Activated CD4-positive, alpha-beta T cell treated with anti-CD3 and anti-CD28 coated beads, Interleukin-2, amount 10 ng/mL, durations not matched to agents 7 days and 5 days (primary cell): ENCODE measurements at regions of chr17 and their contacts with region 1.

Region 1: DNA sequence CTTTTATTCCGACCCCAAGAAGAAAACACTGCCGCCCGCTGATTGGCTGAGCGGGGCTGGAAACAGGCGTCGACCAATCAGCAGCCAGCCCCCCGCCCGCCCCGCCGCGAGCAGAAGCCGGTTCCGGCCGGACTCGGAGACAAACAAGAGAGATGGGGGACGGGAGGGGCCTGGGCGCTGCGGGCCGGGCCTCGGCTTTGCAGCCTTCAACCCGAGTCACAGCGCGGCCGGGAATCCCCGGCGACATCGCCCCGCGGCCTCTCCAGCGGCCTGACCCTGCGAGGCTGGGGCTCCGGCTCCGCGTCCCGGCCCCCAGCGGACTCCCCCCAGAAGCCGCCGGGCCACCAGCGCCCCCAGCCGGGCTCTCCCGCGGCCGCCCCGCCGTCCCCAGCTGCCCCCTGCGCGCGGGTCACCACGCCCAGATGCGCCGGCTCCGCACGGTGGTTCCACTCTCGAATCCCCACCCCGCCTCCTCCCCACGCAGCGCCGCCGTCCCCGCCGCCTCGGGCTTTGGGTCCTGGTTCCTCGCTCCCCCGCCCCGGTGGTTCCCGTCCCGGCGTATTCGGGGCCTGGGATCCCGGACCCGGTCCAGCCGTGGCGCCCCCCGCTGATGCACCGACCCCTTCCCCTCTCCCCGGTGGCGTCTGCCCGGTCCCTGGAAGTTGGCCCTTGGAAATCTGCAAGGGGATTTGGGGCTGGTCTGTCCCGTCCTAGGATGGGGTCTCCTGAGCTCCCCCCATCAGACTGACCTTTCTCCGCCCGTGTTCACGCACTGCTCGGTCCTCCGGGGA is 417 bp upstream of the SLC43A2 start:
- DNase-seq: peak; percentile 90
- H3K4me3 Mint-ChIP-seq: peak overlapping the region; percentile 88
- H3K27ac Mint-ChIP-seq: peak overlapping the region; percentile 90
- H3K4me1 Mint-ChIP-seq: peaks cover 28% of the 10 kb centered on the region
- H3K27me3 Mint-ChIP-seq: peaks cover 45% of the 10 kb centered on the region

Region 2: GRCh38 chr17:1639549-1640343 is 10.7 kb after region 1 on chr17:
- CTCF ChIA-PET with region 1: interaction called, 22 read pairs
- POLR2A ChIA-PET with region 1: no interaction called
- DNase-seq: no peak
- H3K4me3 Mint-ChIP-seq: no peak overlapping the region
- H3K27ac Mint-ChIP-seq: no peak overlapping the region
- H3K4me1 Mint-ChIP-seq: peaks cover 8% of the 10 kb centered on the region
- H3K27me3 Mint-ChIP-seq: no peaks in the 10 kb centered on the region

Region 3: GRCh38 chr17:1673041-1673785 is 44.2 kb after region 1 on chr17:
- CTCF ChIA-PET with region 1: interaction called, 10 read pairs
- POLR2A ChIA-PET with region 1: no interaction called
- DNase-seq: peak; percentile 20
- H3K4me3 Mint-ChIP-seq: no peak overlapping the region
- H3K27ac Mint-ChIP-seq: peak overlapping the region; percentile 34
- H3K4me1 Mint-ChIP-seq: peaks cover 13% of the 10 kb centered on the region
- H3K27me3 Mint-ChIP-seq: no peaks in the 10 kb centered on the region